ENCODE measurements at regions of chr1 and their contacts with region 1.

Region 1: DNA sequence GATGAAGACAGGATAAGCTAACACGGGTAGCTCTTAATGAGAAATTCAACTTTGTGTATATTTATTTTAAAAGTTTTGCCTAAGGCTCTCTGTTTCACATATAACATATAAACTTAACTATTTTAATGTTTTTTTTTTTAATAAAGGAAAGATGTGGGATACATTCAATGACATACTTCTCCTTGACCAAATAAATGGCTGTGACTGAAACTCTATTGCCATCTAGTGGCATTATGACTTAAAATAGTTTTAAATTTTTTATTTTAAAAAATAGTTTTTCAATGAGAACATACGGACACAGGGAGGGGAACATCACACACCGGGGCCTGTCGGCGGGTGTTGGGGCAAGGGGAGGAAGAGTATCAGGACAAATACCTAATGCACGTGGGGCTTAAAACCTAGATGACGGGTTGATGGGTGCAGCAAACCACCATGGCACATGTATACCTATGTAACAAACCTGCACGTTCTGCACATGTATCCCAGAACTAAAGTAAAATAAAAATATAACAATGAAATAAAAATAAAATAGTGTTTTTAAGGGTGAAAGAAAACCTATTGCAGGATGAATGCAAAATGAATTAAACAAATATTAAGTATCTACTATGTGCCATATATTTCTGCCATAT is 83.4 kb downstream of the LYST start:
- DNase-seq: no peak
- ATAC-seq: no peak
- H3K4me3 ChIP-seq: no peak overlapping the region
- H3K27ac ChIP-seq: no peak overlapping the region
- H3K4me1 ChIP-seq: no peaks in the 10 kb centered on the region
- H3K27me3 ChIP-seq: no peaks in the 10 kb centered on the region
- CTCF ChIP-seq: peak in 3 of 5 experiments; percentile 5 to 60 (median 37)
- POLR2A ChIP-seq: no peak

Region 2: GRCh38 chr1:235093696-235094592 is 689.3 kb before region 1 on chr1:
- in situ Hi-C with region 1: no loop called
- intact Hi-C with region 1: loop called (anchors 5 kb)
- DNase-seq: peak in 1 of 2 donors; percentile 66
- ATAC-seq: peak; percentile 61 to 64
- H3K4me3 ChIP-seq: peak overlapping the region in 2 of 4 donors; percentile 15 to 37
- H3K27ac ChIP-seq: no peak overlapping the region
- H3K4me1 ChIP-seq: peaks cover 5% of the 10 kb centered on the region in 2 donors
- H3K27me3 ChIP-seq: no peaks in the 10 kb centered on the region
- CTCF ChIP-seq: peak; percentile 74 to 95 (median 82)
- POLR2A ChIP-seq: no peak

Region 3: DNA sequence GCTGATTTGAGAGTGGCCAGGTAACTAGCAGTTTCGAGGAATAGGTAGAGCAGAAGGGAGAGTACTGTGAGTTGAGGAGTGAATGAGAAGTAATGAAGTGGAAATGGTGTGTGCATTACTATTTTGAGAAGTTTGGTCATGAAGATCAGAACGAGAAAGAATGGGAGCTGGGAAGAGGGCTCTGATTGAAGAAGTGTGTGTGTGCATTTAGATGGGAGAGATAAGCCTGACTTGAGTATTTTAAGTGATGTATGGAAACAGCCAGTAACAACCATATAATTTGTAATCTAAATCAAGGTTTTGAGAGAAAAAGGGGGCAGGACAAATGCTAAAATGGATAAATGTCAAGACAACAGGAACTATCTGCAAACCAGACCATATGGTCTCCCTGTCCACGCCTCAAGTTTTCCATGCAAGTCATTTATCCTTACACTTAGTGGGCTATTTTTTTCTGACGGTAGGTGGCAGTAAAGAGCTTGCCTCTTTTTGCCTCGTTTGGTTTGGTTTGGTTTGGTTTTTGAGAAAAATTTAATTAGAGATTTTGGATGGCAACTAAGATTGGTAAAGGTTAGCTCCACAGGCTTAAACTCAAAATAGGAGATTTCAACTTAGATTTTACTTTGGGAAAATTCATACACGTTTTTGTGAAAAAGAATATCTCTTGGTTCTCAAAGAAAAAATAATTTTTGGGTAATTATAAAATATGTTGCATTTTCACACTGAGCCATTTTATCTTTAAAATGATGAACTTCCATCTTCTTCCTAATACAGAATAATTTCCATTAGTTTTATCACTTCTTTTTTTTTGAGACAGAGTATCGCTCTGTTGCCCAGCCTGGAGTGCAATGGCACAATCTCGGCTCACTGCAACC is 269.5 kb before region 1 on chr1:
- in situ Hi-C with region 1: loop called in 1 of 4 experiments (anchors 10 kb)
- intact Hi-C with region 1: loop called (anchors 5 kb)
- DNase-seq: no peak
- ATAC-seq: no peak
- H3K4me3 ChIP-seq: no peak overlapping the region
- H3K27ac ChIP-seq: no peak overlapping the region
- H3K4me1 ChIP-seq: no peaks in the 10 kb centered on the region
- H3K27me3 ChIP-seq: no peaks in the 10 kb centered on the region
- CTCF ChIP-seq: peak; percentile 61 to 92 (median 82)
- POLR2A ChIP-seq: no peak

Region 4: GRCh38 chr1:235675152-235675890 is 107.9 kb before region 1 on chr1:
- in situ Hi-C with region 1: no loop called
- intact Hi-C with region 1: no loop called
- DNase-seq: no peak
- ATAC-seq: no peak
- H3K4me3 ChIP-seq: no peak overlapping the region
- H3K27ac ChIP-seq: no peak overlapping the region
- H3K4me1 ChIP-seq: no peaks in the 10 kb centered on the region
- H3K27me3 ChIP-seq: no peaks in the 10 kb centered on the region
- CTCF ChIP-seq: no peak
- POLR2A ChIP-seq: no peak

Region 5: DNA sequence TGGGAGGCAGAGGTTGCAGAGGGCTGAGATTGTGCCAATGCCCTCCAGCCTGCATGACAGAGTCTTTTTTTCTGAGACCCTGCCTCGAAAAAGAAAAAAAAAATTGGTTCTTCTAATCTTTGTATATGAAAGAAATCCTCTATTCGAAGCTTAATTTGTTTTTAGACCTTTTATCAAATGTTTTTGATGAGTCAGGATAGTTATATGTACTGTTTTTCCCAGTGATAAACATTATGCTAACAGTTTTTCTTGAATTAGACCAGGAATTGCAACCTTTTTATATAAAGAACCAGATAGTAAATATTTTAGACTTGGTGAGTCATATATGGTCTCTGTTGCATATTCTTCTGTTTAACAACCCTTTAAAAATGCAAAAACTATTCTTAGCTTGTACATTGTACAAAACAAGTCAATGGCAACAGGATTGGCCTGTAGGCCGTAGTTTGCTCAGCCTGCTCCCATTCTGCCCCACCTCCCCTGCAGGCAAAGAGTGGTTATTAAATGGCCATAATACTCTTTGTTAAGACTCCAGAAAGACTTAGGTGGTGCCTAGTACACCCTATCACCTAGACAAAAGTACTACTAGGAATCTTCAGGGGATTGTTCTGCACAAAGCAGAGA is 38.2 kb after region 1 on chr1:
- in situ Hi-C with region 1: no loop called
- intact Hi-C with region 1: no loop called
- DNase-seq: no peak
- ATAC-seq: no peak
- H3K4me3 ChIP-seq: no peak overlapping the region
- H3K27ac ChIP-seq: no peak overlapping the region
- H3K4me1 ChIP-seq: peaks cover 0 to 4% of the 10 kb centered on the region in 2 donors
- H3K27me3 ChIP-seq: no peaks in the 10 kb centered on the region
- CTCF ChIP-seq: no peak
- POLR2A ChIP-seq: no peak